GM12878 (cell line): ENCODE measurements at regions of chr2 and their contacts with region 1.

Region 1: DNA sequence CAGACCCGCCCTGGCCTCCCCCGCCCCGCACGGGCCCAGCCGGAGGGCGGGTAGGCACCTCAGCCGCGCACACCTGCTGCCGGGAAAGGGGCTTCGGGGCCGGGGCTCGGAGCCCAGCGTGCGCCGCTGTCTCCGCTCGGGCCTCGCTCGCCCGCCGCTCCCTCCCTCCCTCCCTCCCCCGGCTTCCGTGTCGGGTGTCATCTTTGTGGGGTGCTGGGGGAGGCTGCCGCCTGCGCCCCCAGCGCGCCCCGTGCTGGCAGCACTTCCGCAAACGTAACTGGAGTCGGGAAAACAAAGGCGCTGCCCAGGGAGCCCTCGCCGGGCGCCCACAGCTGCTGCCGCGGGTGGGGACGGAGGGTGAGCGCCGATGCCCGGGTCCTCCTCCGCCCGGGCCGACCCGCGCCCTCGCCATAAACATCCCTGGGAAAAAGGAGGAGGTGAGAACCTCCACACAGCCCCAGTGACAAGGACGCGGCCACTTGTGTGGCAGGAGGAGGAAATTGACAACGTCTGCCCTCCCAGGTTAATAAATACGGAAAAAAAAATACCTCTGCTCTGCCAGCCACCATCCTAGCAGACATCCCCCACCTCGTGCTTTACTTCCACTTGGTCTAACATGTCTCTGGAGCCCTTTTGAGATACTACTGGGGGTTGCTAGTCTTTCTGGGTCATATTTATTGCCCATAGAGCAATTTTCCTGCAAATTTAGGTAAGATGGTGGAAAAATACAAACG is 550 bp downstream of the MFSD6 start:
- DNase-seq: no peak
- ATAC-seq: peak; percentile 66
- H3K4me3 ChIP-seq: peak overlapping the region; percentile 77
- H3K27ac ChIP-seq: peak overlapping the region; percentile 83
- H3K4me1 ChIP-seq: peaks cover 4% of the 10 kb centered on the region
- H3K27me3 ChIP-seq: no peaks in the 10 kb centered on the region
- CTCF ChIP-seq: no peak
- EP300 ChIP-seq: no peak
- POLR2A ChIP-seq: peak; percentile 82
- RAD21 ChIP-seq: no peak

Region 2: DNA sequence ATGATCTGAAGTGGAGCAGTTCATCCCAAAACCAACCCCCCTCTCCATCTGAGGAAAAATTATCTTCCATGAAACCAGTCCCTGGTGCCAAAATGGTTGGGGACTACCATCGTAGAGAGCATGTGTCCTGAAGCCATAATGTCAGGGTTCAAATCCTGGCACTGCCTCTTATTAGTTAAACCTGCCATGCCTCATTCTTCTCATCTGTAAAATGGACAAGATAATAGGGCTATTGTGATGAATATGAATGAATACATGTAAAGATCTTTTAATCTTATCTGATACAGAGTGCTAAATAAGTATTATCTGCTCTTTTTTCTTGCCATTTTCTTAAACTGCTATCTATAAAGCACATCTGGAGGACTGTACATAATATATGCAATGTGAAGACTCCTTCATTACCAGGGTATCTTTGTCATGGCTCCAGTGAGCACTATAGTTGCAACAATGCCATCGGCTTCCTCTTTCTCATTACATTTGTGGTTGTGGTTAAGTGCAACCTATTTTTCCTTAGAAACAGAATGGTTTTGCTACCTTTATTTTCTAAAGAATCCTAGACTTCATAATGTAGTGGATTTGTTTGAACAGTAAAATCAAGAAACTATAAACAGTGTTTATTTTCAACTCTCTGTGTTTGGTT is 26.4 kb after region 1 on chr2:
- CTCF ChIA-PET with region 1: interaction called, 3 read pairs
- POLR2A ChIA-PET with region 1: interaction called, 3 read pairs
- RAD21 ChIA-PET with region 1: interaction called, 4 read pairs
- SMC1A ChIA-PET with region 1: interaction called, 10 read pairs
- in situ Hi-C with region 1: no loop called
- intact Hi-C with region 1: no loop called
- DNase-seq: no peak
- ATAC-seq: no peak
- H3K4me3 ChIP-seq: no peak overlapping the region
- H3K27ac ChIP-seq: no peak overlapping the region
- H3K4me1 ChIP-seq: peaks cover 30% of the 10 kb centered on the region
- H3K27me3 ChIP-seq: no peaks in the 10 kb centered on the region
- CTCF ChIP-seq: no peak
- EP300 ChIP-seq: no peak
- POLR2A ChIP-seq: no peak
- RAD21 ChIP-seq: no peak

Region 3: DNA sequence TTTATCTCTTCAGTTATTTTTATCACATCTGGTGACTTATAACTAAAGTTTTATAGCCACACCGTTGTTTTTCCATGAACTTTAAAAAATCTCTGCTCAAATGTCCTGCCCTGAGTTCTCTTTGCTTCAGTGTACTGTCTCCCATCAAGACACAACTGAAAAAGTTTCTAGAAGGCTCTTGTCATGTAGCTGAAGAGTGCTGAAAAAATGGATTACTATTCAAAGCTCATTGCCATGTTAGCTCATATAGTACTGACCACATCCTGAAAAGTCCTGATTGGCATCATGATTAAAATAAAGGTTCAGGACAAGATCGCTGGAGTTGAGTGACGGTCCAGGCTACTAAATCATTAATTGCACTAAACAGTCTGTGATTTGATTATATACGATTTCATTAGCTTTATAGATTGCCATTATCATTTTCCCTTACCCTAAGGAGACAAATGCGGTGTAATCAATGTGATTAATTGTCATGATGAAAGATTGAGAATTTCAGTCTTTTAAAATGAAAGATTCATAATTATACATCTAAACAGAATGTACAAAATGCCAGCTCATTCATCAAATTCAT is 61.6 kb after region 1 on chr2:
- CTCF ChIA-PET with region 1: no interaction called
- POLR2A ChIA-PET with region 1: interaction called, 12 read pairs
- RAD21 ChIA-PET with region 1: interaction called, 3 read pairs
- SMC1A ChIA-PET with region 1: no interaction called
- in situ Hi-C with region 1: no loop called
- intact Hi-C with region 1: no loop called
- DNase-seq: no peak
- ATAC-seq: no peak
- H3K4me3 ChIP-seq: no peak overlapping the region
- H3K27ac ChIP-seq: peak overlapping the region; percentile 82
- H3K4me1 ChIP-seq: peaks cover 48% of the 10 kb centered on the region
- H3K27me3 ChIP-seq: no peaks in the 10 kb centered on the region
- CTCF ChIP-seq: no peak
- EP300 ChIP-seq: no peak
- POLR2A ChIP-seq: no peak
- RAD21 ChIP-seq: no peak